ENCODE measurements at regions of chr1 and their contacts with region 1.

Region 1: GRCh38 chr1:15741183-15741850 is 982 bp upstream of the TMEM82 start:
- DNase-seq: peak; percentile 71 to 87
- ATAC-seq: peak; percentile 56 to 67
- H3K4me3 ChIP-seq: no peak overlapping the region
- H3K27ac ChIP-seq: peak overlapping the region; percentile 3 to 92 (median 64)
- H3K4me1 ChIP-seq: peaks cover 37% of the 10 kb centered on the region in 2 donors
- H3K27me3 ChIP-seq: no peaks in the 10 kb centered on the region
- CTCF ChIP-seq: peak; percentile 89 to 95 (median 92)
- POLR2A ChIP-seq: no peak

Region 2: GRCh38 chr1:14915356-14916054 is 825.8 kb before region 1 on chr1:
- in situ Hi-C with region 1: no loop called
- intact Hi-C with region 1: no loop called
- DNase-seq: no peak
- ATAC-seq: no peak
- H3K4me3 ChIP-seq: no peak overlapping the region
- H3K27ac ChIP-seq: no peak overlapping the region
- H3K4me1 ChIP-seq: no peaks in the 10 kb centered on the region
- H3K27me3 ChIP-seq: no peaks in the 10 kb centered on the region
- CTCF ChIP-seq: peak; percentile 33 to 74 (median 59)
- POLR2A ChIP-seq: no peak

Region 3: DNA sequence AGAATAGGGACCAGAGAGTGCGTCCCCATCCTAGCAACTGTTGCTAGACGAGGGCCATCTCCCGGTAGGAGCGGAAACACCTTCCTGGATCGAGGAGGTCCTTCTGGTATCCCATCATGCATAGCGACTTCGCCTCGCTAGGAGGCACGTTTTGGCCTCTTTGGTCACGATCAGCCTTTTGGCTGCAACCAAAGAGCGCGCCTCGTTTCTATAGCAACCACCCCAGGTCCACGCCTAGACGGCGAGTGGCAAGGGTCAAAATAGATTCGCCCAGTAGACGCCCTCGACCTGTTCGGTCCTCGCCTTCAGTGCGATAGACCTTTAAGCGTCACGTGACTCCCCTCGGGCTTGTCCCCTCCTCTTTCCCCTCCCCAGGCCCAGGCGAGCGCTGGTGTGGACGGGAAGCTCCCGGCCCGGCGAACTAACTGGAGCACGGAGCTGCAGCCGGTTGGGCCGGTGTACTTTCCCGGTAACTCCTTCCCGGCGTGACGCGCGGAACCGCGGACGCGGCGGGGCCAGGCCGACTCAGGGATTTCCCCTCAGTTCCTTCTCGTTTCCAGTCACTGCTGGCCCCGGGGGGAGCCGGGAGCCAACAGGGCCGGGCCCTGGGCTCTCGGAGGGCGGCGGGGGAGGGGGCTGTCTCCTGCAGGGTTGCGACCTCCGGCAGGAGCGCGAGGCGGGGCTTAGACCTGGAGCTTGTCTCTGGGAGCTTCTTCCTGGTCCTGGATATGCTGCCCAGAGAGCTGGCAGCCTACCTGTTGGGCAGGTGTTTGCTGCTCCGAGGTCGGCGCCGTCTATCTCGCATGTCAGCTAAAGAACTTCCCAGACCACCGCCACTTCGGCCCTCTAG is 214.6 kb before region 1 on chr1 and contains the start of gene DNAJC16:
- in situ Hi-C with region 1: no loop called
- intact Hi-C with region 1: loop called (anchors 2 kb)
- DNase-seq: peak; percentile 100
- ATAC-seq: peak; percentile 77 to 81
- H3K4me3 ChIP-seq: peak within 1 kb of the TSS; percentile 92 to 99 (median 96)
- H3K27ac ChIP-seq: peak within 1 kb of the TSS; percentile 97 to 99 (median 98)
- H3K4me1 ChIP-seq: peaks cover 24 to 34% of the 10 kb centered on the region in 2 donors
- H3K27me3 ChIP-seq: no peaks in the 10 kb centered on the region
- CTCF ChIP-seq: peak in 3 of 5 experiments; percentile 24 to 65 (median 50)
- POLR2A ChIP-seq: peak; percentile 72 to 78
- total RNA-seq, gene DNAJC16: 20.0 to 43.1 (median 22.6) TPM

Region 4: GRCh38 chr1:15584489-15585363 is 156.6 kb before region 1 on chr1 and contains the start of gene AGMAT:
- in situ Hi-C with region 1: loop called in 1 of 4 experiments (anchors 25 kb)
- intact Hi-C with region 1: loop called (anchors 5 kb)
- DNase-seq: peak in 1 of 2 donors; percentile 49
- ATAC-seq: peak in 1 of 2 donors; percentile 16
- H3K4me3 ChIP-seq: peak within 1 kb of the TSS; percentile 44 to 72 (median 54)
- H3K27ac ChIP-seq: peak within 1 kb of the TSS; percentile 73 to 95 (median 82)
- H3K4me1 ChIP-seq: peaks cover 7 to 22% of the 10 kb centered on the region in 2 donors
- H3K27me3 ChIP-seq: no peaks in the 10 kb centered on the region
- CTCF ChIP-seq: peak in 3 of 5 experiments; percentile 11 to 40 (median 13)
- POLR2A ChIP-seq: no peak
- total RNA-seq, gene AGMAT: 0.85 to 2.6 (median 2.0) TPM

Region 5: GRCh38 chr1:15656464-15656863 is 84.9 kb before region 1 on chr1:
- in situ Hi-C with region 1: no loop called
- intact Hi-C with region 1: loop called (anchors 2 kb)
- DNase-seq: peak; percentile 54 to 75
- ATAC-seq: peak; percentile 89 to 92
- H3K4me3 ChIP-seq: no peak overlapping the region
- H3K27ac ChIP-seq: peak overlapping the region; percentile 79 to 91 (median 89)
- H3K4me1 ChIP-seq: peaks cover 29 to 31% of the 10 kb centered on the region in 2 donors
- H3K27me3 ChIP-seq: no peaks in the 10 kb centered on the region
- CTCF ChIP-seq: no peak
- POLR2A ChIP-seq: peak in 1 of 2 donors; percentile 21